Heart right ventricle (tissue), 16 donors: ENCODE measurements at regions of chr14 and their contacts with region 1.

Region 1: GRCh38 chr14:58788655-58789505 is 151.1 kb downstream of the DACT1 start:
- DNase-seq: no peak
- ATAC-seq: peak in 2 of 8 donors; percentile 35 to 38
- H3K4me3 ChIP-seq: no peak overlapping the region
- H3K27ac ChIP-seq: peak overlapping the region in 1 of 10 donors; percentile 39
- H3K4me1 ChIP-seq: peaks cover 0 to 21% (median 3%) of the 10 kb centered on the region in 9 donors
- H3K27me3 ChIP-seq: peaks cover 0 to 6% (median 0%) of the 10 kb centered on the region in 7 donors
- CTCF ChIP-seq: no peak

Region 2: GRCh38 chr14:58362798-58363412 is 426.0 kb before region 1 on chr14:
- intact Hi-C with region 1: no loop called
- DNase-seq: no peak
- ATAC-seq: no peak
- H3K4me3 ChIP-seq: no peak overlapping the region
- H3K27ac ChIP-seq: no peak overlapping the region
- H3K4me1 ChIP-seq: no peaks in the 10 kb centered on the region
- H3K27me3 ChIP-seq: no peaks in the 10 kb centered on the region
- CTCF ChIP-seq: peak in 6 of 9 donors; percentile 33 to 47 (median 38)

Region 3: DNA sequence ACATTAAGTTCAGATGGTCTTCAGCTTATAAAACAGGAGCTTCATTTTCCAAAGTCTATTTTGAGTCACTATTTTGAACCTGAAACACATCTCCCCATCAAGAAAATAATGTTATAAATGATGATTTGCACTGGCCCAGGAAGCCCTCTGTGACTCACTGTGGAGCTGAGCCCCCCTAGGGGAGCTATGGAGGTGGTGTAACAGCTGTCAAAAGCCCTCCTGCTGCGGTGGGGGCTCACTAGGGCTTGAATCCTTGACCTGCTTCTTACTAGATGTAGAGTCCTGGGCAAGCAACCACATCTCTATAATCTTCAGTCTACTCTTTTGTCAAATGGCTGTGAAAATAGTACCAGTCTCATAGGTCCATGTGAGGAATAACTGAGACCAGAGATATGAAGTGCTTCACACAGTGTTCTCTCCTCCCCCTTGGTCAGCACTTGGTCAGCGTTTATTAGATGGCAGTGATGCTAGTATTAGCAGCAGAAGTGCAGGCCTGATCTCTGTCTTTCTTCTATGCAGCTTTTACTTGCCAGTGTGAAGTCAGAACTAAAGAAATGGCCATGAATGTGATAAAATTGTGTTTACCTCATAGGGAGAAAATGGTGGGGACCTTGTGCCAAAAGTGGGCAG is 998.3 kb after region 1 on chr14:
- intact Hi-C with region 1: loop called in 1 of 10 experiments (anchors 5 kb)
- DNase-seq: no peak
- ATAC-seq: no peak
- H3K4me3 ChIP-seq: no peak overlapping the region
- H3K27ac ChIP-seq: no peak overlapping the region
- H3K4me1 ChIP-seq: no peaks in the 10 kb centered on the region
- H3K27me3 ChIP-seq: no peaks in the 10 kb centered on the region
- CTCF ChIP-seq: no peak